ENCODE measurements at regions of chr6 and their contacts with region 1.

Region 1: DNA sequence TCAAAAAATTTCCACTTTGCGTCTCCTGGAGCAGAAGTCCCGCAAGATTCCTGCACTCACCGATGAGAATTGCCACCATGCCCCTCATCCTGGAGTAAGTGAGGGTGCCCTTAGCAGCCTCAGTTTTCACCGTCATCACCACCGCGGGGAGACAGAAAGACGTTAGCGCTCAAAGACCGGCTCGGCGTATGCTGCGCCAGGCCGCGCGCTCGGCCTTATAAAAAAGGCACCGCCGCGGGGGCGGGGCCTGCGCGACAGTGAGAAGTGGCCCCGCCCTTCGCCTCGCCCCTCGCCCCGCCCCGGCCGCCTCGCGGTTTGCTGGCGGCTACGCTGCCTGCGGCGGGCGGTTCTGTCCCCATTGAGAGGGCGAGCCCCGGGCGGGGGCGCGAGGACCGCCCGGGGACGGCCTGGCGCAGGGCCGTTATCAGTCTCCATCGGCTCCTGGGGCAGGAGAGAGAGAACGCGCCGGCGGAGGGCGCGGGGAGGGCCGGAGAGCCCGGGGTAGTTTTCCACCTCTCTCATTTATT is 122.3 kb upstream of the SLC2A12 start:
- DNase-seq: peak; percentile 90
- H3K4me3 ChIP-seq: peak overlapping the region; percentile 85 to 100 (median 98)
- H3K27ac ChIP-seq: peak overlapping the region; percentile 98
- H3K4me1 ChIP-seq: peaks cover 59% of the 10 kb centered on the region
- H3K27me3 ChIP-seq: no peaks in the 10 kb centered on the region
- CTCF ChIP-seq: no peak
- POLR2A ChIP-seq: peak; percentile 100

Region 2: DNA sequence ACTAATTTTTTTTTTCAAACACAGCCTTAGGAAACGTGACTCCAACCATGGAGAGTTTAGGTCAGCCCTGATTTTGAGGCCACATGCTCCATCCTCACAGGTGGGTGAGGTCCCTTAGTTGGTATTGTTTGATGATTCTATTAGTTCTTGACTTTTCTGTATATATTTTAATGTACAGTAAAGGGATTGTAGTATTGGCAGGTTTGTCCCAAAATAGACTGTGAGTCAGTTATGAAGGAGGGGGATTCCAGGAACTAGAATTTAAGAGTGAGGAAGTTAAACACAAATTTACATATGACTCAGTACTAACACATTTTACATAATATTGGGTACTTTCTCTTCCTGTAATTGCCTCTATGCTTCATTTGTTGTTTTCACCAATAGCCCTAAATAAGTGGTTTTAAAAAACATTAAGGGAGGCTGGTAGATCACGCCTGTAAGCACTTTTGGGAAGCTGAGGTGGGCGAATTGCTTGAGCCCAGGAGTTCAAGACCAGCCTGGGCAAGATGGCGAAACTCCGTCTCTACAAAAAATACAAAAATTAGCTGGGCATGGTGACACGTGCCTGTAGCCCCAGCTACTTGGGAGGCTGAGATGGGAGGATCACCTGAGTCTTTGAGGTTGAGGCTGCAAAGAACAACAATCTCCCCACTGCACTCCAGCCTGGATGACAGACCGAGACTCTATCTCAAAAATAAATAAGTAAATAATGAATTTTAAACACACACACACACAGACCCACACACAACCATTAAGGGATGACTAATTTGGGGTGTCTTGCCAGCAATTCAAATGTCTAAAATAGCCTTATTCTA is 61.4 kb after region 1 on chr6:
- CTCF ChIA-PET with region 1: no interaction called
- POLR2A ChIA-PET with region 1: no interaction called
- dilution Hi-C with region 1: no loop called
- intact Hi-C with region 1: loop called (anchors 1 kb)
- DNase-seq: peak; percentile 67
- H3K4me3 ChIP-seq: no peak overlapping the region
- H3K27ac ChIP-seq: peak overlapping the region; percentile 74
- H3K4me1 ChIP-seq: peaks cover 10% of the 10 kb centered on the region
- H3K27me3 ChIP-seq: no peaks in the 10 kb centered on the region
- CTCF ChIP-seq: no peak
- POLR2A ChIP-seq: no peak

Region 3: DNA sequence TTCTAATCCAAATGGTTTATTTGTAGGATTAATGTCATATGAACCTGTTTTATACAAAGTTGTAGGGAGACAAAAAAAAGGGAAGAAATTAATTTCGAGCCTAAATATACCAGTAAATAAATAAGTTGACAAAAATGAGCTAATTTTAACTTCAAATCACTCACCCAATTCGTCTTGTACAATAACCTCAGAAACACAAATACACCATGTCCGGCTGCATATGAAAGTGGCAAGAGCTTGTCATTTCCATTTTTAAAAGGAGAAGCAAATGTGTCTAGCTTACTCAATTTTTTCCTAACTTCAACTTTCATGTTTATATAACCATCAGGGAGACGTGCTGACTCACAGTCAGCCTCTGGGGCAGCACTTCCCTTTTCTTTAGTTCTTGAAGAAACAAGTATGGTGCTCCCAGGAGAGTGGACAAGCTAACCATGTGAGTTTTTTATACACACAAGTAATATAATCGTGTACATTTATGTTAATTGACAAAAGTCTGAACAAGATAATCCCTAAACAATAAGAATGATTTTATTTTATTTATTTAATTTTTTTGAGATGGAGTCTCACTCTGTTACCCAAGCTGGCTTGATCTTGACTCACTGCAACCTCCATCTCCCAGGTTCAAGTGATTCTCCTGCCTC is 198.7 kb after region 1 on chr6:
- CTCF ChIA-PET with region 1: no interaction called
- POLR2A ChIA-PET with region 1: no interaction called
- dilution Hi-C with region 1: no loop called
- intact Hi-C with region 1: loop called (anchors 5 kb)
- DNase-seq: peak; percentile 90
- H3K4me3 ChIP-seq: no peak overlapping the region
- H3K27ac ChIP-seq: no peak overlapping the region
- H3K4me1 ChIP-seq: peaks cover 9% of the 10 kb centered on the region
- H3K27me3 ChIP-seq: no peaks in the 10 kb centered on the region
- CTCF ChIP-seq: no peak
- POLR2A ChIP-seq: no peak

Region 4: DNA sequence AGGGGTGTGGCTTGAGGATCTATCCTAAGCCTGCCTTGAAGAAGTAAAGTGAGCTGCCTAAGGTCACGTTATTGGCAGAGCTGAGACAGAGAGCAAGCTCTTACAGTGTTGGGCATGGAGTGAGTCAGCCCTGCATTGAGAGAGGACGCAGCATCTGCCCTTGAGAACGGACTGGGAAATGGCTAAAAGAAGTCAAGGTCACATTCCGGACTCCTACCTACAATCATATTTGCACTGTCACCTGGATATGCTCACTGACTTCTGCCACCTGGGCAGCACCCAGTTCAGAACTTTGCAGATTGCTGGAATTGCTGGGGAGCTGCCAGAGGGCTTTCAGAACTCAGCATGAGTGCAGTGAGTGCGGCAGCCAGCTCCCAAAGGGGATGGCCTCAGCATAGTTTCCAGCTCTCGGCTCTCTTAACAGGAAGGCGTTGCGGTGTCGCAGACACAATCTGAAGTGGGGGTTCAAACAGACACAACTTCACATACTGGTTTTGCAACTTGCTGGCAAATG is 342.5 kb after region 1 on chr6:
- CTCF ChIA-PET with region 1: interaction called, 4 read pairs
- POLR2A ChIA-PET with region 1: no interaction called
- dilution Hi-C with region 1: no loop called
- intact Hi-C with region 1: loop called (anchors 1 kb)
- DNase-seq: peak; percentile 75
- H3K4me3 ChIP-seq: no peak overlapping the region
- H3K27ac ChIP-seq: peak overlapping the region; percentile 65
- H3K4me1 ChIP-seq: peaks cover 38% of the 10 kb centered on the region
- H3K27me3 ChIP-seq: no peaks in the 10 kb centered on the region
- CTCF ChIP-seq: no peak
- POLR2A ChIP-seq: no peak

Region 5: DNA sequence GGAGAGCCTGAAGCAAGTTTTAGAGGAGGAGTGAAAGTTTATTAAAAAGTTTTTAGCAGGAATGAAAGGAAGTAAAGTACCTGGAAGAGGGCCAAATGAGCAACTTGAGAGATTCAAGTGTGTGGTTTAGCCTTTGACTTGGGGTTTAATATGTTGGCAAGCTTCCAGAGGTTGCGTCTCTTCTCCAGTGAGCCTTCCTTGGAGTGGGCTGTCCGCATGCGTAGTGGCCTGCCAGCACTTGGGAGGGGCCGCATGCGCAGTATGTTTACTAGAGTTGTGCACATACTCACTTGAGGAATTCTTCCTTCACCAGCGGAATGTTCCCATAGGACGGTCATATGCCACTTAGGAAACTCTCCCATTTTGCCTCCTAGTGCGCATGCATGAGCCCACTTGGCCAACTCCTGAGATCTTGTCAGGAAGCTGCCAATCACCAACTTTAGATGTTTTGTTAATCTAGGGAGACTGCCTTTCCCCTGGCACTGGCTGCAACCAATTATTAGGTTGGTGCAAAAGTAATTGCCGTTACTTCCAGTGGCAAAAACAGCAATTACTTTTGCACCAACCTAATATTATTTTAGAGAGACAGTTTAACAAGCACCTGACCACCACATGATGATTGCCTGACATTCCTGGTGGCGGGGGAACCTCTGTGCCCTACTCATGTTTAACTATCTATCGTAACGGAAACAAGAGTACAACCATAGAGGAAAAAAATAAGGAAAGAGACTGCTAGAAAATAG is 540.1 kb after region 1 on chr6:
- CTCF ChIA-PET with region 1: interaction called, 4 read pairs
- POLR2A ChIA-PET with region 1: no interaction called
- dilution Hi-C with region 1: no loop called
- intact Hi-C with region 1: loop called (anchors 1 kb)
- DNase-seq: peak; percentile 26
- H3K4me3 ChIP-seq: no peak overlapping the region
- H3K27ac ChIP-seq: no peak overlapping the region
- H3K4me1 ChIP-seq: peaks cover 24% of the 10 kb centered on the region
- H3K27me3 ChIP-seq: no peaks in the 10 kb centered on the region
- CTCF ChIP-seq: no peak
- POLR2A ChIP-seq: no peak

Measured in endothelial cell of umbilical vein (primary cell).